Heart left ventricle (tissue), 16 donors: ENCODE measurements at regions of chr10 and their contacts with region 1.

Region 1: GRCh38 chr10:5623081-5623748 is 43.2 kb downstream of the ASB13 start:
- DNase-seq: peak; percentile 86 to 94 (median 90)
- ATAC-seq: peak; percentile 87 to 96 (median 91)
- H3K4me3 ChIP-seq: no peak overlapping the region
- H3K27ac ChIP-seq: peak overlapping the region in 2 of 12 donors; percentile 11 to 24
- H3K4me1 ChIP-seq: peaks cover 0 to 26% (median 5%) of the 10 kb centered on the region in 12 donors
- H3K27me3 ChIP-seq: no peaks in the 10 kb centered on the region
- CTCF ChIP-seq: peak; percentile 84 to 94 (median 91)
- POLR2A ChIP-seq: no peak

Region 2: GRCh38 chr10:4813023-4813422 is 810.2 kb before region 1 on chr10:
- intact Hi-C with region 1: loop called in 1 of 10 experiments (anchors 10 kb)
- DNase-seq: no peak
- ATAC-seq: no peak
- H3K4me3 ChIP-seq: no peak overlapping the region
- H3K27ac ChIP-seq: no peak overlapping the region
- H3K4me1 ChIP-seq: peaks cover 0 to 24% (median 0%) of the 10 kb centered on the region in 12 donors
- H3K27me3 ChIP-seq: no peaks in the 10 kb centered on the region
- CTCF ChIP-seq: no peak
- POLR2A ChIP-seq: no peak

Region 3: DNA sequence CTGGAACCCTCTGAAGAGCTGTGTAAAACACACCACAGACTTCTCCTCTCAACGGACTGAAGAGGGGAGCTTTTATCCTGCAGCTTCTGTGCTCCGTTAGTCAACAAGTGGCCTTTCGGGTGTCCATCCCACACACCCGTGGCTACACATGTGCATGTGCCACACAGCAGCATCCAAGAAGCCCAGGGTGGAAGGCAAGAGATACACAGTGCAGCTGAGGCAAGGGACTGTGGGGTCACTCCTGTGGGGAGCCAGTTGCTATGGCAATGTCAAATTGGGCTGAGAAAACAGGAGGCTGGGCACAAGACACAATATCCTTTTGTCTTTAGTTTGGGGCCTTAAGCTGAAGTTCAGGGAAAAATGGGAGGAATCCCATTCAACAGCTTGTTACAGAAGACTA is 182.1 kb before region 1 on chr10:
- intact Hi-C with region 1: loop called (anchors 1 to 2 kb)
- DNase-seq: no peak
- ATAC-seq: peak in 1 of 4 donors; percentile 27
- H3K4me3 ChIP-seq: no peak overlapping the region
- H3K27ac ChIP-seq: no peak overlapping the region
- H3K4me1 ChIP-seq: peaks cover 0 to 5% (median 3%) of the 10 kb centered on the region in 12 donors
- H3K27me3 ChIP-seq: no peaks in the 10 kb centered on the region
- CTCF ChIP-seq: no peak
- POLR2A ChIP-seq: no peak

Region 4: GRCh38 chr10:5446390-5446926 is 176.8 kb before region 1 on chr10:
- intact Hi-C with region 1: loop called (anchors 1 to 2 kb)
- DNase-seq: peak; percentile 89 to 93 (median 91)
- ATAC-seq: peak; percentile 97 to 99 (median 98)
- H3K4me3 ChIP-seq: peak overlapping the region; percentile 2 to 65 (median 54)
- H3K27ac ChIP-seq: peak overlapping the region in 10 of 12 donors; percentile 7 to 74 (median 60)
- H3K4me1 ChIP-seq: peaks cover 0 to 39% (median 7%) of the 10 kb centered on the region in 12 donors
- H3K27me3 ChIP-seq: no peaks in the 10 kb centered on the region
- CTCF ChIP-seq: no peak
- POLR2A ChIP-seq: peak in 1 of 2 donors; percentile 85

Region 5: GRCh38 chr10:5534880-5535856 is 88.0 kb before region 1 on chr10:
- intact Hi-C with region 1: loop called in 1 of 10 experiments (anchors 5 kb)
- DNase-seq: no peak
- ATAC-seq: peak; percentile 48 to 81 (median 79)
- H3K4me3 ChIP-seq: no peak overlapping the region
- H3K27ac ChIP-seq: peak overlapping the region in 9 of 12 donors; percentile 12 to 71 (median 51)
- H3K4me1 ChIP-seq: peaks cover 0 to 17% (median 0%) of the 10 kb centered on the region in 12 donors
- H3K27me3 ChIP-seq: no peaks in the 10 kb centered on the region
- CTCF ChIP-seq: no peak
- POLR2A ChIP-seq: no peak